ENCODE measurements at regions of chr3 and their contacts with region 1.

Region 1: GRCh38 chr3:123258811-123259420 is 57.2 kb downstream of the SEC22A start:
- DNase-seq: no peak
- H3K4me3 ChIP-seq: no peak overlapping the region
- H3K27ac ChIP-seq: no peak overlapping the region
- H3K4me1 ChIP-seq: no peaks in the 10 kb centered on the region
- H3K27me3 ChIP-seq: no peaks in the 10 kb centered on the region
- CTCF ChIP-seq: peak; percentile 51 to 62 (median 58)

Region 2: GRCh38 chr3:122858373-122858772 is 400.5 kb before region 1 on chr3:
- intact Hi-C with region 1: loop called (anchors 5 kb)
- DNase-seq: no peak
- H3K4me3 ChIP-seq: no peak overlapping the region
- H3K27ac ChIP-seq: peak overlapping the region in 1 of 2 donors; percentile 25
- H3K4me1 ChIP-seq: peaks cover 0 to 2% of the 10 kb centered on the region in 2 donors
- H3K27me3 ChIP-seq: no peaks in the 10 kb centered on the region
- CTCF ChIP-seq: peak; percentile 11 to 43 (median 16)